Sigmoid colon (tissue), 7 donors: ENCODE measurements at regions of chr4 and their contacts with region 1.

Region 1: GRCh38 chr4:41990365-41991111 is at the start of gene SLC30A9:
- DNase-seq: peak; percentile 98
- H3K4me3 ChIP-seq: peak within 1 kb of the TSS; percentile 74 to 93 (median 88)
- H3K27ac ChIP-seq: peak within 1 kb of the TSS; percentile 83 to 89 (median 88)
- H3K4me1 ChIP-seq: peaks cover 0 to 29% (median 23%) of the 10 kb centered on the region in 4 donors
- H3K27me3 ChIP-seq: no peaks in the 10 kb centered on the region
- CTCF ChIP-seq: peak; percentile 21 to 61 (median 40)
- EP300 ChIP-seq: no peak
- POLR2A ChIP-seq: peak; percentile 65 to 86
- total RNA-seq, gene SLC30A9: 31.1 to 42.4 (median 40.8) TPM

Region 2: DNA sequence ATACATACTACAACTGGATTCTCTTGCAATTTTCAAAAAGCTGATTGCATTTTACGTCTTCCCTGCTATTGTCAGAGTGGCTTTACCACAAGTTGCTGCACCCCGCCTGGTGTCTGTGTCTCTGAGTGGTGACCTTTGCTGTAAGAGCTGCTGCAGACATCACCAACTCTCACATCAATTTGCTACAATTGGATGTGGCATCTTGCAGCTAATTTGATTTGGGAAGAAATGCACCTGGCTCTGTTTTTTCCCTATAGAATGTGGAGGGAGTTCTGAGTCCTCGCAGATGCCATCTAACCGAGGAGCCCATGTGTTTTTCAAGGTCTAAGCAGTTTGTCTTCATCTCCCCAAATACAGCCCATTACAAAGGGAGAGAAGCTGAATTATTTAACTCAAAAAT is 168.2 kb before region 1 on chr4:
- intact Hi-C with region 1: no loop called
- DNase-seq: no peak
- H3K4me3 ChIP-seq: no peak overlapping the region
- H3K27ac ChIP-seq: no peak overlapping the region
- H3K4me1 ChIP-seq: no peaks in the 10 kb centered on the region
- H3K27me3 ChIP-seq: peaks cover 0 to 7% (median 0%) of the 10 kb centered on the region in 3 donors
- CTCF ChIP-seq: no peak
- EP300 ChIP-seq: no peak
- POLR2A ChIP-seq: no peak

Region 3: DNA sequence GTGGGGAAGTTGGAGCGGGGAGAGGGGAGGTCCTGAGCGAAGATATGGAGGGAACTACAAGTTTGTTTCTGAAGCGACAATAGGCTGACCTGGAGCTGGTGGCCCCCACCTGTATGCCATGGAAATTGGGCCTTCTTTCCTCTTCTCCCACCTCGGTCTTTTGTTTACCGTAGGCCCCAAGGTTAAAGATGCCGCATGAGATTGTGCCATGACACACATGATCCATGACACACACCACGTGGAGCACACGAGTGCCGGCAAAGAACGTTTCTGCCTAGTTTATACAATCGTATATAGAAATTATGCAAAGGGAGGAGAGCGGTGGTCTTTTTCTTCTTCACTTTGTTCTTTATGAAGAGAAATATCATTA is 54.9 kb before region 1 on chr4:
- intact Hi-C with region 1: loop called (anchors 2 kb)
- DNase-seq: no peak
- H3K4me3 ChIP-seq: peak overlapping the region; percentile 62 to 89 (median 78)
- H3K27ac ChIP-seq: peak overlapping the region; percentile 73 to 84 (median 81)
- H3K4me1 ChIP-seq: peaks cover 0 to 26% (median 17%) of the 10 kb centered on the region in 4 donors
- H3K27me3 ChIP-seq: no peaks in the 10 kb centered on the region
- CTCF ChIP-seq: no peak
- EP300 ChIP-seq: no peak
- POLR2A ChIP-seq: no peak